ENCODE measurements at regions of chr17 and their contacts with region 1.

Region 1: GRCh38 chr17:70739065-70739464 is 569.7 kb downstream of the KCNJ2 start:
- DNase-seq: no peak
- ATAC-seq: no peak
- H3K4me3 ChIP-seq: no peak overlapping the region
- H3K27ac ChIP-seq: no peak overlapping the region
- H3K4me1 ChIP-seq: no peaks in the 10 kb centered on the region
- H3K27me3 ChIP-seq: no peaks in the 10 kb centered on the region
- CTCF ChIP-seq: no peak
- EP300 ChIP-seq: no peak
- POLR2A ChIP-seq: no peak
- RAD21 ChIP-seq: no peak

Region 2: GRCh38 chr17:70699408-70699807 is 39.7 kb before region 1 on chr17:
- CTCF ChIA-PET with region 1: no interaction called
- POLR2A ChIA-PET with region 1: no interaction called
- in situ Hi-C with region 1: no loop called
- intact Hi-C with region 1: no loop called
- DNase-seq: no peak
- ATAC-seq: no peak
- H3K4me3 ChIP-seq: no peak overlapping the region
- H3K27ac ChIP-seq: no peak overlapping the region
- H3K4me1 ChIP-seq: no peaks in the 10 kb centered on the region
- H3K27me3 ChIP-seq: no peaks in the 10 kb centered on the region
- CTCF ChIP-seq: no peak
- EP300 ChIP-seq: no peak
- POLR2A ChIP-seq: no peak
- RAD21 ChIP-seq: no peak

Region 3: GRCh38 chr17:70797166-70797565 is 58.1 kb after region 1 on chr17:
- CTCF ChIA-PET with region 1: no interaction called
- POLR2A ChIA-PET with region 1: no interaction called
- in situ Hi-C with region 1: no loop called
- intact Hi-C with region 1: no loop called
- DNase-seq: no peak
- ATAC-seq: no peak
- H3K4me3 ChIP-seq: no peak overlapping the region
- H3K27ac ChIP-seq: no peak overlapping the region
- H3K4me1 ChIP-seq: no peaks in the 10 kb centered on the region
- H3K27me3 ChIP-seq: no peaks in the 10 kb centered on the region; a peak in 1 of 5 replicates
- CTCF ChIP-seq: no peak
- EP300 ChIP-seq: no peak
- POLR2A ChIP-seq: no peak
- RAD21 ChIP-seq: no peak

Region 4: DNA sequence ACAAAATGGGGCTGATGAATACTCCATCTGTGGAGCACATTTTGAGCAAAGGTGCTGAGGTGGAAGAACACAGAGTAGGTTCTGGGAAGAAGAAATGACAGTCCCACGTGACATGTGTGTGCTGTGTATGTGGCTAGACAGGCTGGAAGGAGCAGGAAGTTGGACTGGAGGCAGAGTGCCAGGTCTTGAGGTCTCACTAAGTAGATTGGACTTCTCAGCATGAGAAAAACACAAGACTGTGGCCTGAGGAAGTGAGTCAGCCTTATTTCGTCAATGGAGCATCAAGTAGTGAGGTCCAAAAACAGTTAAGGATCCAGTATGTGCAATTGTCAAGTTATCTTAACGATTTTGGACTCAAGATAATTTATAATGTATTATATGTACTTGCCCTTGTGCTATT is 166.7 kb after region 1 on chr17:
- CTCF ChIA-PET with region 1: no interaction called
- POLR2A ChIA-PET with region 1: no interaction called
- in situ Hi-C with region 1: no loop called
- intact Hi-C with region 1: loop called (anchors 2 kb)
- DNase-seq: no peak
- ATAC-seq: no peak
- H3K4me3 ChIP-seq: no peak overlapping the region
- H3K27ac ChIP-seq: no peak overlapping the region
- H3K4me1 ChIP-seq: no peaks in the 10 kb centered on the region
- H3K27me3 ChIP-seq: no peaks in the 10 kb centered on the region
- CTCF ChIP-seq: no peak
- EP300 ChIP-seq: no peak
- POLR2A ChIP-seq: no peak
- RAD21 ChIP-seq: no peak